Naive thymus-derived CD4-positive, alpha-beta T cell (primary cell): ENCODE measurements at regions of chr5 and their contacts with region 1.

Region 1: DNA sequence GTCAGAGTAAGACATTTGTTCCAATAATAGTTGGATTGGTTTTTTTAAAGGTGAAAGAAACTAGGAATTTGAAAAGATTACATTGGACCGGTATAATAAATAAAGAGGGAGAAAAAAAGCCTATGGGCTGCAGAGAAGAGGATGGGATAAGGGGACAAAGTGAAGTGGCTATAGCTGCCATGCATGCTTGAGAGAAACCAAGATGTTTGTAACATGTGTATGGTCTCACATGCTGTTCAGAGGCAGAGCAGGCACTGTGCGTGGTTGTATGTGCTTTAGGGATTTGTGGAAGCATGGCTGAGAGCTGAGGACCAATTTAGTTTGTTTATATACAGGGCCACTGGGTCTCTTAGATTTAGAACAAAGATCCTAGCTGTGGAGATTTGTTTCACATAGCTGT is 32.7 kb downstream of the LNPEP start:
- DNase-seq: no peak
- ATAC-seq: no peak
- H3K4me3 ChIP-seq: no peak overlapping the region
- H3K4me3 Mint-ChIP-seq: peak overlapping the region in 9 of 10 donors; percentile 1 to 67 (median 50)
- H3K27ac ChIP-seq: no peak overlapping the region
- H3K27ac Mint-ChIP-seq: peak overlapping the region in 6 of 9 donors; percentile 46 to 97 (median 68)
- H3K4me1 ChIP-seq: peaks cover 35 to 51% of the 10 kb centered on the region in 2 donors
- H3K4me1 Mint-ChIP-seq: peaks cover 63 to 100% (median 94%) of the 10 kb centered on the region in 7 donors
- H3K27me3 ChIP-seq: no peaks in the 10 kb centered on the region
- H3K27me3 Mint-ChIP-seq: no peaks in the 10 kb centered on the region

Region 2: GRCh38 chr5:96909003-96909402 is 59.6 kb before region 1 on chr5:
- CTCF ChIA-PET with region 1: no interaction called
- POLR2A ChIA-PET with region 1: no interaction called
- intact Hi-C with region 1: no loop called
- DNase-seq: no peak
- ATAC-seq: no peak
- H3K4me3 ChIP-seq: no peak overlapping the region
- H3K4me3 Mint-ChIP-seq: no peak overlapping the region
- H3K27ac ChIP-seq: no peak overlapping the region
- H3K27ac Mint-ChIP-seq: peak overlapping the region in 3 of 9 donors; percentile 3 to 38 (median 21)
- H3K4me1 ChIP-seq: no peaks in the 10 kb centered on the region
- H3K4me1 Mint-ChIP-seq: peaks cover 7 to 34% (median 31%) of the 10 kb centered on the region in 7 donors
- H3K27me3 ChIP-seq: no peaks in the 10 kb centered on the region
- H3K27me3 Mint-ChIP-seq: no peaks in the 10 kb centered on the region

Region 3: DNA sequence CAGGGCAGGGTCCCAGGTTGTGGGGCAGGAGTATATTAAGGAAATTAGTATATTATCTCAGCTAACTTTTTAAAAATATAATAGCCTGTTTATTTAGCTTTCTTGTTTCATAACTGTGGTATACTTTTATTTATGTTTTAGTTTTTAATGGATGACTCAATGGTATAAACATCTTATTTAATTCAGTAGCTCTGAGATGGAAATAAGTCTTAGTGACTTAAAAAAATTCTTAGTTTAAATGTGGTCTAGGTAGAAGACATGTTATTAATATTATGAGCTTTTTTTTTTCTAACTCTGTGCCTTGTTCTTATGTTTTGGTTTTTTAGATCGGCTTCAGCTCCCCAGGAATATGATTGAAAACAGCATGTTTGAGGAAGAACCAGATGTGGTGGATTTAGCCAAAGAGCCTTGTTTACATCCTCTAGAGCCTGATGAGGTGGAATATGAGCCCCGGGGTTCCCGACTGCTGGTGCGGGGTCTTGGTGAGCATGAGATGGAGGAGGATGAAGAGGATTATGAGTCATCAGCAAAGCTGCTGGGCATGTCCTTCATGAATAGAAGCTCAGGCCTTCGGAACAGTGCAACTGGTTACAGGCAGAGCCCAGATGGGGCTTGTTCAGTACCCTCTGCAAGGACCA is 10.3 kb after region 1 on chr5:
- CTCF ChIA-PET with region 1: no interaction called
- POLR2A ChIA-PET with region 1: interaction called, 11 read pairs
- intact Hi-C with region 1: loop called in 1 of 2 experiments (anchors 1 kb)
- DNase-seq: no peak
- ATAC-seq: no peak
- H3K4me3 ChIP-seq: no peak overlapping the region
- H3K4me3 Mint-ChIP-seq: no peak overlapping the region
- H3K27ac ChIP-seq: no peak overlapping the region
- H3K27ac Mint-ChIP-seq: peak overlapping the region in 3 of 9 donors; percentile 5 to 55 (median 24)
- H3K4me1 ChIP-seq: peaks cover 12 to 15% of the 10 kb centered on the region in 2 donors
- H3K4me1 Mint-ChIP-seq: peaks cover 39 to 93% (median 78%) of the 10 kb centered on the region in 7 donors
- H3K27me3 ChIP-seq: no peaks in the 10 kb centered on the region
- H3K27me3 Mint-ChIP-seq: no peaks in the 10 kb centered on the region

Region 4: GRCh38 chr5:97009212-97009898 is 40.7 kb after region 1 on chr5:
- CTCF ChIA-PET with region 1: no interaction called
- POLR2A ChIA-PET with region 1: interaction called, 3 read pairs
- intact Hi-C with region 1: loop called in 1 of 2 experiments (anchors 2 kb)
- DNase-seq: peak in 7 of 9 donors; percentile 25 to 63 (median 49)
- ATAC-seq: peak; percentile 79
- H3K4me3 ChIP-seq: no peak overlapping the region
- H3K4me3 Mint-ChIP-seq: peak overlapping the region; percentile 12 to 77 (median 64)
- H3K27ac ChIP-seq: peak overlapping the region; percentile 9
- H3K27ac Mint-ChIP-seq: peak overlapping the region; percentile 1 to 82 (median 72)
- H3K4me1 ChIP-seq: peaks cover 10 to 21% of the 10 kb centered on the region in 2 donors
- H3K4me1 Mint-ChIP-seq: peaks cover 22 to 52% (median 30%) of the 10 kb centered on the region in 7 donors
- H3K27me3 ChIP-seq: no peaks in the 10 kb centered on the region
- H3K27me3 Mint-ChIP-seq: no peaks in the 10 kb centered on the region